ENCODE measurements at regions of chr12 and their contacts with region 1.

Region 1: GRCh38 chr12:93766796-93767523 is 89.8 kb downstream of the CRADD start:
- DNase-seq: peak in 9 of 14 experiments; percentile 9 to 68 (median 23)
- ATAC-seq: peak; percentile 63
- H3K4me3 ChIP-seq: no peak overlapping the region
- H3K4me3 Mint-ChIP-seq: no peak overlapping the region
- H3K27ac ChIP-seq: no peak overlapping the region
- H3K27ac Mint-ChIP-seq: no peak overlapping the region
- H3K4me1 ChIP-seq: peaks cover 2% of the 10 kb centered on the region
- H3K4me1 Mint-ChIP-seq: peaks cover 27% of the 10 kb centered on the region
- H3K27me3 ChIP-seq: no peaks in the 10 kb centered on the region
- H3K27me3 Mint-ChIP-seq: no peaks in the 10 kb centered on the region
- CTCF ChIP-seq: peak; percentile 26

Region 2: DNA sequence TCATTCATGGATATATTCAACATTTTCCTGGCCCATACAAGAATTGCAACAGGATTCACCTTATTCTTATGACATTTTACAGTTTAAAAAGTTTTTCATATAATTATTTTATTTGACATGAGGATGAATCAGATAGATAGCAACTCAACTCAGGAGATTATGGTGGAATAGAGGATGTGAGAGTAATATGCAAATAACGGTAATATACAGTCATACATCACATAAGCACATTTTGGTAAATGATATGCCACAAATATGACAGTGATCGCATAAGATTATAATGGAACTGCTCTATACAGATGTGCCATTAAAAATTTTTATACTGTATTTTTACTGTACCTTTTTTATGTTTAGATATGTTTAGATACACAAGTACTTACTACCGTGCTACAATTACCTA is 113.9 kb before region 1 on chr12:
- CTCF ChIA-PET with region 1: no interaction called
- POLR2A ChIA-PET with region 1: no interaction called
- intact Hi-C with region 1: no loop called
- DNase-seq: no peak
- ATAC-seq: no peak
- H3K4me3 ChIP-seq: no peak overlapping the region
- H3K4me3 Mint-ChIP-seq: no peak overlapping the region
- H3K27ac ChIP-seq: no peak overlapping the region
- H3K27ac Mint-ChIP-seq: no peak overlapping the region
- H3K4me1 ChIP-seq: no peaks in the 10 kb centered on the region
- H3K4me1 Mint-ChIP-seq: no peaks in the 10 kb centered on the region
- H3K27me3 ChIP-seq: no peaks in the 10 kb centered on the region
- H3K27me3 Mint-ChIP-seq: no peaks in the 10 kb centered on the region
- CTCF ChIP-seq: no peak

Region 3: DNA sequence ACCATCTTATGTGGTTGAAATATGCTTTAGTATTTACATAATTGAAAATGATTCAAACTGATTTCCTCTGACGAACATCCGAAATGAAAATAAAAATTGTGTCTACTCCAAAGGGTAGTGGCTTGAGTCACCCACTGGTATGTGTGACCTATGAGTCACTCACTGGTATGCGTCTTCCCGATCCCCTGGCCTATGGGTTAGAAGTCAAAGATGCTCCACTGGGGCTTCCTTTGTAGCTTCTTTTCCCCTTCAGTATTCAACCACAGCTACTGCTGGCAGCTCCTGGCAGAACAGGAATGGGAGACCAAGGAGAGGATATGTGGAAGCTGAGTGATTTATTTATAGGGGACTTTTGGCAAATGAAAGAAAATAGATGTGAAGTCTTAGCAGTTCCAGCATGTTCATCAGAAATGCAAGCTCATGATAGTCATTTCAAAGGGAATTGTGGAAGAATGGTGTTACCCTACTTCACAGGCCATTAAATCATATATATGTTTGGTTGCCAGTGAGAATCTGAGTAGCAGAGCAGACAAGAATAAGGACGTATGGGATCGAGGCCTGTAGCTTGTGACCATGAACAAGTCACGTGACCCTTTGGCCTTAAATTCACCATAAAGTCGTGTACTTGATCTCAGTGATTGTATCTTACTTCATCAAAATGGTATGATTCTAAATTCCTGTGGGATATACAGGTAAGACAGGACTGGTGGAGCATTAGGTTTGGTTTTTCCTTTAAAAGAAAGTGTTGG is 18.5 kb after region 1 on chr12:
- CTCF ChIA-PET with region 1: interaction called, 11 read pairs
- POLR2A ChIA-PET with region 1: interaction called, 3 read pairs
- intact Hi-C with region 1: no loop called
- DNase-seq: peak in 9 of 14 experiments; percentile 10 to 67 (median 27)
- ATAC-seq: peak; percentile 43
- H3K4me3 ChIP-seq: no peak overlapping the region
- H3K4me3 Mint-ChIP-seq: peak overlapping the region; percentile 42
- H3K27ac ChIP-seq: no peak overlapping the region
- H3K27ac Mint-ChIP-seq: peak overlapping the region; percentile 86
- H3K4me1 ChIP-seq: peaks cover 28% of the 10 kb centered on the region
- H3K4me1 Mint-ChIP-seq: peaks cover 65% of the 10 kb centered on the region
- H3K27me3 ChIP-seq: no peaks in the 10 kb centered on the region
- H3K27me3 Mint-ChIP-seq: no peaks in the 10 kb centered on the region
- CTCF ChIP-seq: no peak

Region 4: GRCh38 chr12:94074980-94075928 is 308.3 kb after region 1 on chr12:
- CTCF ChIA-PET with region 1: no interaction called
- POLR2A ChIA-PET with region 1: no interaction called
- intact Hi-C with region 1: loop called in 1 of 2 experiments (anchors 10 kb)
- DNase-seq: peak in 3 of 14 experiments; percentile 34 to 51 (median 39)
- ATAC-seq: no peak
- H3K4me3 ChIP-seq: no peak overlapping the region
- H3K4me3 Mint-ChIP-seq: no peak overlapping the region
- H3K27ac ChIP-seq: no peak overlapping the region
- H3K27ac Mint-ChIP-seq: no peak overlapping the region
- H3K4me1 ChIP-seq: peaks cover 15% of the 10 kb centered on the region
- H3K4me1 Mint-ChIP-seq: peaks cover 23% of the 10 kb centered on the region
- H3K27me3 ChIP-seq: no peaks in the 10 kb centered on the region
- H3K27me3 Mint-ChIP-seq: no peaks in the 10 kb centered on the region
- CTCF ChIP-seq: peak; percentile 57

Measured in CD4-positive, alpha-beta T cell (primary cell).